Endothelial cell of umbilical vein (primary cell): ENCODE measurements at regions of chr3 and their contacts with region 1.

Region 1: DNA sequence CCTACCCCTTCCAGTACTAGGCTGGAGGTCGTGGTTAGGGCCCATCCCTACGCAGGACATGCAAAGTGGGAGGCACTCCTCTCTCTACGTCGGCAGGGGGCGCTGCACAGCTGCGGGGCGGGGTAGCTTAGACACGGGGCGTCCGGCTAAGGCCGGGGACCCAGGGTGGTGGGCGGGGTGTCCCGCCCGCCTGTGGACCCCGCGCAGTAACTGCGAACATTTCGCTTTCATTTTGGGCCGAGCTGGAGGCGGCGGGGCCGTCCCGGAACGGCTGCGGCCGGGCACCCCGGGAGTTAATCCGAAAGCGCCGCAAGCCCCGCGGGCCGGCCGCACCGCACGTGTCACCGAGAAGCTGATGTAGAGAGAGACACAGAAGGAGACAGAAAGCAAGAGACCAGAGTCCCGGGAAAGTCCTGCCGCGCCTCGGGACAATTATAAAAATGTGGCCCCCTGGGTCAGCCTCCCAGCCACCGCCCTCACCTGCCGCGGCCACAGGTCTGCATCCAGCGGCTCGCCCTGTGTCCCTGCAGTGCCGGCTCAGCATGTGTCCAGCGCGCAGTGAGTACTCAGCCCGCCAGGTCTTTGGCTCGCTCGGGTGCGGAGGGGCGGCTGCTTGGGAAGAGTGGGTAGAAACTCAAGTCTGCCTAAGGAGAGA is at the start of gene IL12A:
- DNase-seq: peak; percentile 75
- H3K4me3 ChIP-seq: peak within 1 kb of the TSS; percentile 58 to 71 (median 60)
- H3K27ac ChIP-seq: no peak within 1 kb of the TSS
- H3K4me1 ChIP-seq: peaks cover 4% of the 10 kb centered on the region
- H3K27me3 ChIP-seq: no peaks in the 10 kb centered on the region
- CTCF ChIP-seq: peak; percentile 96 to 98
- POLR2A ChIP-seq: no peak
- total RNA-seq, gene IL12A: 1.5 and 1.7 TPM in 2 replicates

Region 2: GRCh38 chr3:159892171-159892795 is 96.5 kb before region 1 on chr3:
- CTCF ChIA-PET with region 1: interaction called, 85 read pairs
- POLR2A ChIA-PET with region 1: no interaction called
- dilution Hi-C with region 1: no loop called
- intact Hi-C with region 1: no loop called
- DNase-seq: no peak
- H3K4me3 ChIP-seq: no peak overlapping the region
- H3K27ac ChIP-seq: no peak overlapping the region
- H3K4me1 ChIP-seq: peaks cover 7% of the 10 kb centered on the region
- H3K27me3 ChIP-seq: no peaks in the 10 kb centered on the region
- CTCF ChIP-seq: no peak
- POLR2A ChIP-seq: no peak

Region 3: DNA sequence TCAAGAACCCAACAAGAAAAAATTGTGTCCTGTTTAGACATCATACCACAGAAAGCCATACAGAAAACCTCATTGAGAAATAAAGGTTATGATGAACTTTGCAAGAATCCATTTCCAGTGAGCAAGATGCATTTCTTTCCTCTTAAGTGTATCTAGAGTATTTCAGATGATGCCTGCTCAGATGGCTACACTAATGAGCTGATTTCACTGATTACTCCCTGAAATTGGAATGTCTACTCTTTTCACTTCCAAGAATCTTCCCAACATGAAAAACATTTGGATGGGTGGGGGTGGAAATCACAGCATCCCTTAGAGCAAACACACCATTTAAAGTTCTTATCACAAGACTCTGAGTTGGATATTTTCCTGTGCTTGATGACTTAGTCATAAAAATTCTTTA is 41.5 kb before region 1 on chr3:
- CTCF ChIA-PET with region 1: interaction called, 11 read pairs
- POLR2A ChIA-PET with region 1: no interaction called
- dilution Hi-C with region 1: no loop called
- intact Hi-C with region 1: no loop called
- DNase-seq: peak; percentile 9
- H3K4me3 ChIP-seq: no peak overlapping the region
- H3K27ac ChIP-seq: no peak overlapping the region
- H3K4me1 ChIP-seq: no peaks in the 10 kb centered on the region
- H3K27me3 ChIP-seq: no peaks in the 10 kb centered on the region
- CTCF ChIP-seq: no peak
- POLR2A ChIP-seq: no peak

Region 4: DNA sequence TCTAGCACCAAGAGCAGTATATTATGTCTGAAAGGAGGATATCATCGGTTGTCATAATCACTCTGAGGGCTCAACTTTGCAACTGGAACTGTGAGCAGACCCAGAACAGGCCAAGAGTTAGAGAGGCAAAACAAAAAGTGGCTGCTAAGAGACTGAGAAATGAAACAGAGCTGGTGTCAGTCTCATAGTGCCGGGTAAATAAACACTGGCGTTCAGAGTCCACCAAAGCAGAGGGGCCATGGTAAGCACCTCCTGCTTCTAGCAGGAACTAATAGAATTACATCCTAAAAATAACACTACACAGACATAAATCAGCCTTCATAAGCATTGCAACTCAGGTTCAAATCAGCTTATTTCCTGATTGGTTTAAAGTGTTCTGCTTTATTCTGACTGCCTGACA is 10.4 kb before region 1 on chr3:
- CTCF ChIA-PET with region 1: interaction called, 35 read pairs
- POLR2A ChIA-PET with region 1: no interaction called
- dilution Hi-C with region 1: no loop called
- intact Hi-C with region 1: no loop called
- DNase-seq: no peak
- H3K4me3 ChIP-seq: no peak overlapping the region
- H3K27ac ChIP-seq: no peak overlapping the region
- H3K4me1 ChIP-seq: no peaks in the 10 kb centered on the region
- H3K27me3 ChIP-seq: peaks cover 0 to 2% of the 10 kb centered on the region in 2 experiments
- CTCF ChIP-seq: no peak
- POLR2A ChIP-seq: no peak

Region 5: DNA sequence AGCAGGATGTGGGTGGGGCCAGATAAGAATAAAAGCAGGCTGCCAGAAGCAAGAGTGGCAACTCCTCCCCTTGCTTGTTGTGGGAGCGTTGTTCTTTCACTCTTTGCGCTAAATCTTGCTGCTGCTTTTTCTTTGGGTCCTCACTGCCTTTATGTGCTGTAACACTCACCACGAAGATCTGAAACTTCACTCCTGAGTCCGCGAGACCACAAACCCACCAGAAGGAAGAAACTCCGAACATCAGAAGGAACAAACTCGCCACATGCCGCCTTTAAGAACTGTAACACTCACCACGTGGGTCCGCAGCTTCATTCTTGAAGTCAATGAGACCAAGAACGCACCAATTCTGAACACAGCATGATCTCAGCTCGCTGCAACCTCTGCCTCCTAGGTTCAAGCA is 72.8 kb after region 1 on chr3:
- CTCF ChIA-PET with region 1: no interaction called
- POLR2A ChIA-PET with region 1: no interaction called
- dilution Hi-C with region 1: no loop called
- intact Hi-C with region 1: no loop called
- DNase-seq: no peak
- H3K4me3 ChIP-seq: no peak overlapping the region
- H3K27ac ChIP-seq: no peak overlapping the region
- H3K4me1 ChIP-seq: no peaks in the 10 kb centered on the region
- H3K27me3 ChIP-seq: peaks cover 0 to 2% of the 10 kb centered on the region in 2 experiments
- CTCF ChIP-seq: no peak
- POLR2A ChIP-seq: no peak